Heart right ventricle (tissue), 16 donors: ENCODE measurements at regions of chr11 and their contacts with region 1.

Region 1: DNA sequence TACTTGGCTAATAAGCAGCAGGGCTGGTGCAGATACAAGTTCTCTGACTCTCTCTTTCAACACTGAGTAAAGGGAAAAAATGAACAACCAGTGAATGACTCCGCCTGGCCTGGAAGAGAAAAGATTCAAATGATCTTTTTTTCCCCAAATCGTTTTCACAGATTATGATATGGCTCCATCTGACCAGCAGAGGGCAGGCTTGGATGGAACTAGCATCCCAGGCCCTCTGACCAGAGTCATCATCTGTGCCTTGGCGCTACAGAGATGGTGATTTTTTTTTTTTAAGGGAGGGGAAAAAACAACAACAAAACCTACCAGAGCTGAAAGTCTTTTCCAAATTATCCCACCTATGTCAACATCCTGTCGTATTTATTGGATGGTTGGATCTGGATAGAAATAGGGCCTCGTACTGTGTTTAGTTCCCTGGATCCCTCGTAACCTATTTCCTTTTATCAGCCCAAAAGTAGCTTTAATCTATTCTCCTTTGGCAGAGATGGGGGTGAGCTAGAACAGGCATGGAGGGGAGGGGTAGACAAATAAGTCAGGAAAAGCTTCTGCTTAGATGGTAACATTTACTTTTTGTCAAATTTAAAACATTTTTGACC is 69.7 kb downstream of the PRSS23 start:
- DNase-seq: peak; percentile 40 to 77
- ATAC-seq: peak; percentile 74 to 94 (median 86)
- H3K4me3 ChIP-seq: no peak overlapping the region
- H3K27ac ChIP-seq: peak overlapping the region in 1 of 10 donors; percentile 6
- H3K4me1 ChIP-seq: peaks cover 0 to 23% (median 8%) of the 10 kb centered on the region in 9 donors
- H3K27me3 ChIP-seq: no peaks in the 10 kb centered on the region
- CTCF ChIP-seq: peak; percentile 64 to 92 (median 81)

Region 2: GRCh38 chr11:86919557-86920210 is 49.6 kb after region 1 on chr11:
- intact Hi-C with region 1: loop called (anchors 1 to 5 kb)
- DNase-seq: peak in 1 of 2 donors; percentile 28
- ATAC-seq: peak in 6 of 8 donors; percentile 56 to 78 (median 64)
- H3K4me3 ChIP-seq: no peak overlapping the region
- H3K27ac ChIP-seq: peak overlapping the region; percentile 31 to 92 (median 78)
- H3K4me1 ChIP-seq: peaks cover 8 to 57% (median 40%) of the 10 kb centered on the region in 9 donors
- H3K27me3 ChIP-seq: no peaks in the 10 kb centered on the region
- CTCF ChIP-seq: peak; percentile 48 to 79 (median 67)

Region 3: GRCh38 chr11:87281496-87281895 is 411.4 kb after region 1 on chr11:
- intact Hi-C with region 1: loop called in 3 of 10 experiments (anchors 5 to 10 kb)
- DNase-seq: peak in 1 of 2 donors; percentile 24
- ATAC-seq: peak in 7 of 8 donors; percentile 57 to 90 (median 84)
- H3K4me3 ChIP-seq: no peak overlapping the region
- H3K27ac ChIP-seq: peak overlapping the region in 1 of 10 donors; percentile 11
- H3K4me1 ChIP-seq: peaks cover 0 to 25% (median 5%) of the 10 kb centered on the region in 9 donors
- H3K27me3 ChIP-seq: no peaks in the 10 kb centered on the region
- CTCF ChIP-seq: peak; percentile 14 to 69 (median 43)

Region 4: GRCh38 chr11:87290304-87290922 is 420.3 kb after region 1 on chr11:
- intact Hi-C with region 1: loop called in 9 of 10 experiments (anchors 2 to 10 kb)
- DNase-seq: no peak
- ATAC-seq: peak in 2 of 8 donors; percentile 35 to 57
- H3K4me3 ChIP-seq: no peak overlapping the region
- H3K27ac ChIP-seq: no peak overlapping the region
- H3K4me1 ChIP-seq: no peaks in the 10 kb centered on the region
- H3K27me3 ChIP-seq: no peaks in the 10 kb centered on the region
- CTCF ChIP-seq: peak; percentile 30 to 83 (median 75)

Region 5: GRCh38 chr11:87421422-87421821 is 551.4 kb after region 1 on chr11:
- intact Hi-C with region 1: loop called in 3 of 10 experiments (anchors 5 to 10 kb)
- DNase-seq: peak in 1 of 2 donors; percentile 67
- ATAC-seq: peak; percentile 80 to 89 (median 86)
- H3K4me3 ChIP-seq: no peak overlapping the region
- H3K27ac ChIP-seq: peak overlapping the region in 1 of 10 donors; percentile 37
- H3K4me1 ChIP-seq: peaks cover 0 to 22% (median 11%) of the 10 kb centered on the region in 9 donors
- H3K27me3 ChIP-seq: no peaks in the 10 kb centered on the region
- CTCF ChIP-seq: peak; percentile 67 to 89 (median 85)